Sciatic nerve (tissue), 2 donors: ENCODE measurements at regions of chr11 and their contacts with region 1.

Region 1: GRCh38 chr11:130213143-130213978 is 53.8 kb downstream of the ST14 start:
- DNase-seq: peak; percentile 83
- ATAC-seq: peak; percentile 84

Region 2: DNA sequence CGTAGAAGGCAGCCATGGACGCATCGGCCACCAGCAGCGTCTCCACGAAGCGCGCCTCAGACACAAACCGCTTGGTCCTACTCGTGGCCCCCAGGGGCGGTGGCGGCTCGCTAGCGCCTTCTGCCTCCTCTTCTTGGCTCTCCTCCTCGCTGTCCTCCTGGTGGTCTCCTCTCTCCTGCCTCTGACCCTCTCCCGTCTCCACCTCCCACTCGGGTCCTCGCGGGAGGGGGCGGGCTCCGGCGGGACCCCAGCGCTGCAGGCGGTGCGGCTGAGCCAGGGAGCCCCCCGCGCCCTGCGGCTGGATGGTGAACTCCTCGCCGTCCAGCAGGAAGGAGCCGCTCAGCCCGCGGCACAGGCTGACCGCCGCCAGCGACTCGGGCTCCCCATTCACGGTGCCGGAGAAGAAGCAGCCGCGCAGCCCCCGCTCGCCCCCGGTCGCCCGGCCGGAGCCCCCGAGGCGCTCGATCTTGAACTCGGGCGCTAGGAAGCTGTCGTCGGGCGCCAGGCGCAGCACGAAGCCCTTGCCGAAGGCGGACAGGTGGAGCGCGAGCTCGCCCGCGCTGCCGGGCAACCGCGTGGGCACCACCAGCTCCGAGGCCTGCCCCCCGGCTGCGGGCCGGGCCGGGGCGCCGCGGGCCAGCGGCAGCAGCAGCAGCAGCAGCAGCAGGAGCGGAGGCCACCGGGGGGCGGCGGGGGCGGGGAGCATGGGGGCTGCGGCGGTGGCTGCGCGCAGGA is 214.4 kb after region 1 on chr11:
- intact Hi-C with region 1: loop called (anchors 10 kb)
- DNase-seq: no peak
- ATAC-seq: peak; percentile 13